Aorta (tissue), 5 donors: ENCODE measurements at regions of chr12 and their contacts with region 1.

Region 1: DNA sequence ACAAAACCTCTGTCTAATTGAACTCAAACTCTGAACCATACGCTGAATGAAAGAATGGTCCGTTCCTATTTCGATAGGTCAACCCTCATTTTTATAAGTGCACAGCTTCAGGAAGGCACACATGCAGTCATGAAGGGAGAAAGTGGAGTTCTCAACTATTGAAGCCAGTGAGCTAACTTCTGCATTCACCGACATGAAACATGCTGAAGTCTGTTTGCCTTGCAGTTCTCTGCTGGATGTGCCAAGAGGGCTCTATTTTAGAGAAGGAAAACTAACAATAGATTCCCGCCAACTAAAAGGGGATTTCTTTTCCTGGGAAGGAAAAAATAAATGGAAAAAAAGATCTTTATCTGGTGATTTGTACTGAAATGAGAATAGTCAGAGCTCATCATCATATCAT is 191.0 kb upstream of the PLEKHG7 start:
- DNase-seq: no peak
- ATAC-seq: no peak
- H3K4me3 ChIP-seq: no peak overlapping the region
- H3K27ac ChIP-seq: no peak overlapping the region
- H3K4me1 ChIP-seq: peaks cover 0 to 5% of the 10 kb centered on the region in 2 donors
- H3K27me3 ChIP-seq: no peaks in the 10 kb centered on the region

Region 2: GRCh38 chr12:92551853-92552397 is 40.1 kb after region 1 on chr12:
- intact Hi-C with region 1: loop called in 1 of 2 experiments (anchors 5 kb)
- DNase-seq: no peak
- ATAC-seq: no peak
- H3K4me3 ChIP-seq: no peak overlapping the region
- H3K27ac ChIP-seq: no peak overlapping the region
- H3K4me1 ChIP-seq: no peaks in the 10 kb centered on the region
- H3K27me3 ChIP-seq: no peaks in the 10 kb centered on the region